Sigmoid colon (tissue), 7 donors: ENCODE measurements at regions of chr2 and their contacts with region 1.

Region 1: GRCh38 chr2:232438951-232439757 is 16.8 kb upstream of the ALPI start:
- DNase-seq: no peak
- H3K4me3 ChIP-seq: no peak overlapping the region
- H3K27ac ChIP-seq: no peak overlapping the region
- H3K4me1 ChIP-seq: peaks cover 0 to 3% (median 0%) of the 10 kb centered on the region in 4 donors
- H3K27me3 ChIP-seq: no peaks in the 10 kb centered on the region
- CTCF ChIP-seq: peak in 3 of 4 experiments; percentile 20 to 68 (median 44)
- EP300 ChIP-seq: no peak
- POLR2A ChIP-seq: no peak

Region 2: DNA sequence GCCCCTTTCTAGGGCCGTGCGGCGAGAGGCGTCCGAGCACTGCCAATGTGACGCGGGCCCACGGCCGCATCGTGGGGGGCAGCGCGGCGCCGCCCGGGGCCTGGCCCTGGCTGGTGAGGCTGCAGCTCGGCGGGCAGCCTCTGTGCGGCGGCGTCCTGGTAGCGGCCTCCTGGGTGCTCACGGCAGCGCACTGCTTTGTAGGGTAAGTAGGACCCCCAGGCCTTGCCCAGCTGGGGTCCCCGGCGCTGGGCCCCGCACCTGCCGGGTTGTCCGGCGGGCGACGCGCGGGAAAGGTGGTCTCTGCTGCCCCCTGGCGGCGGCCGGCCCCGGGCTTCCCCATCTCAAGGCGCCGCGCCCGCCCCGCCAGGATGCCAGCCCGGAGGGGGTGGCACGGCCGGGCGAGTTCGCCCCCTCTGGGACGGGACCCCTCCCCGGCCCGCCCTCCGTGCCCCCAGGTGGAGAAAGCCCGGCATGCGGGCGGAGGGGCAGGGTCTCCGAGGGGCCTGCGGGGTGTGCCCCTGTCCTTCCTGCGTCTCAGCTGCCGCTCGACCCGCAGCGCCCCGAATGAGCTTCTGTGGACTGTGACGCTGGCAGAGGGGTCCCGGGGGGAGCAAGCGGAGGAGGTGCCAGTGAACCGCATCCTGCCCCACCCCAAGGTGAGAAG is 82.9 kb after region 1 on chr2:
- intact Hi-C with region 1: loop called (anchors 2 kb)
- DNase-seq: no peak
- H3K4me3 ChIP-seq: peak overlapping the region in 3 of 4 donors; percentile 2 to 39 (median 38)
- H3K27ac ChIP-seq: no peak overlapping the region
- H3K4me1 ChIP-seq: peaks cover 0 to 31% (median 29%) of the 10 kb centered on the region in 4 donors
- H3K27me3 ChIP-seq: peaks cover 30 to 74% (median 51%) of the 10 kb centered on the region in 3 donors
- CTCF ChIP-seq: peak in 3 of 4 experiments; percentile 26 to 95 (median 31)
- EP300 ChIP-seq: no peak
- POLR2A ChIP-seq: no peak